ENCODE measurements at regions of chr1 and their contacts with region 1.

Region 1: GRCh38 chr1:163071405-163072255 is 2.5 kb downstream of the RGS4 start:
- DNase-seq: peak; percentile 79
- H3K4me3 ChIP-seq: peak overlapping the region in 2 of 4 donors; percentile 4 to 9
- H3K27ac ChIP-seq: peak overlapping the region in 3 of 4 donors; percentile 35 to 52 (median 47)
- H3K4me1 ChIP-seq: peaks cover 0 to 40% (median 16%) of the 10 kb centered on the region in 4 donors
- H3K27me3 ChIP-seq: no peaks in the 10 kb centered on the region
- CTCF ChIP-seq: peak; percentile 32 to 59 (median 55)
- EP300 ChIP-seq: no peak
- POLR2A ChIP-seq: no peak

Region 2: GRCh38 chr1:162822391-162823200 is 249.0 kb before region 1 on chr1:
- intact Hi-C with region 1: no loop called
- DNase-seq: peak; percentile 58
- H3K4me3 ChIP-seq: peak overlapping the region; percentile 28 to 49 (median 40)
- H3K27ac ChIP-seq: peak overlapping the region in 1 of 4 donors; percentile 5
- H3K4me1 ChIP-seq: peaks cover 0 to 12% (median 10%) of the 10 kb centered on the region in 4 donors
- H3K27me3 ChIP-seq: peaks cover 0 to 19% (median 0%) of the 10 kb centered on the region in 3 donors
- CTCF ChIP-seq: no peak
- EP300 ChIP-seq: no peak
- POLR2A ChIP-seq: no peak

Region 3: GRCh38 chr1:162878000-162878596 is 193.5 kb before region 1 on chr1:
- intact Hi-C with region 1: loop called (anchors 2 kb)
- DNase-seq: peak; percentile 71
- H3K4me3 ChIP-seq: no peak overlapping the region
- H3K27ac ChIP-seq: no peak overlapping the region
- H3K4me1 ChIP-seq: no peaks in the 10 kb centered on the region
- H3K27me3 ChIP-seq: no peaks in the 10 kb centered on the region
- CTCF ChIP-seq: peak; percentile 51 to 76 (median 68)
- EP300 ChIP-seq: no peak
- POLR2A ChIP-seq: no peak

Measured in sigmoid colon (tissue), 7 donors.